ENCODE measurements at regions of chr10 and their contacts with region 1.

Region 1: GRCh38 chr10:11515596-11516430 is 95.6 kb downstream of the USP6NL start:
- DNase-seq: peak in 2 of 6 donors; percentile 18 to 60
- ATAC-seq: peak; percentile 83 to 97 (median 96)
- H3K4me3 ChIP-seq: no peak overlapping the region
- H3K27ac ChIP-seq: no peak overlapping the region
- H3K4me1 ChIP-seq: no peaks in the 10 kb centered on the region
- H3K27me3 ChIP-seq: no peaks in the 10 kb centered on the region
- CTCF ChIP-seq: peak; percentile 43 to 76 (median 67)

Region 2: GRCh38 chr10:11424456-11425297 is 91.1 kb before region 1 on chr10:
- intact Hi-C with region 1: no loop called
- DNase-seq: peak in 5 of 6 donors; percentile 30 to 74 (median 56)
- ATAC-seq: peak; percentile 87 to 94 (median 92)
- H3K4me3 ChIP-seq: no peak overlapping the region
- H3K27ac ChIP-seq: no peak overlapping the region
- H3K4me1 ChIP-seq: no peaks in the 10 kb centered on the region
- H3K27me3 ChIP-seq: no peaks in the 10 kb centered on the region
- CTCF ChIP-seq: peak; percentile 54 to 88 (median 68)

Region 3: GRCh38 chr10:11724938-11725776 is 209.3 kb after region 1 on chr10:
- intact Hi-C with region 1: loop called in 2 of 3 experiments (anchors 5 to 10 kb)
- DNase-seq: peak in 1 of 6 donors; percentile 27
- ATAC-seq: peak; percentile 78 to 89 (median 84)
- H3K4me3 ChIP-seq: no peak overlapping the region
- H3K27ac ChIP-seq: peak overlapping the region in 3 of 4 donors; percentile 10 to 36 (median 13)
- H3K4me1 ChIP-seq: no peaks in the 10 kb centered on the region
- H3K27me3 ChIP-seq: no peaks in the 10 kb centered on the region
- CTCF ChIP-seq: peak in 3 of 4 donors; percentile 39 to 63 (median 55)

Measured in pancreas (tissue), 10 donors.